Endothelial cell of umbilical vein (primary cell): ENCODE measurements at regions of chr3 and their contacts with region 1.

Region 1: GRCh38 chr3:169390271-169391230 is 273.0 kb downstream of the MECOM start:
- DNase-seq: peak; percentile 80
- H3K4me3 ChIP-seq: no peak overlapping the region
- H3K27ac ChIP-seq: peak overlapping the region; percentile 88
- H3K4me1 ChIP-seq: peaks cover 45% of the 10 kb centered on the region
- H3K27me3 ChIP-seq: no peaks in the 10 kb centered on the region
- CTCF ChIP-seq: peak; percentile 15 to 25
- POLR2A ChIP-seq: no peak

Region 2: DNA sequence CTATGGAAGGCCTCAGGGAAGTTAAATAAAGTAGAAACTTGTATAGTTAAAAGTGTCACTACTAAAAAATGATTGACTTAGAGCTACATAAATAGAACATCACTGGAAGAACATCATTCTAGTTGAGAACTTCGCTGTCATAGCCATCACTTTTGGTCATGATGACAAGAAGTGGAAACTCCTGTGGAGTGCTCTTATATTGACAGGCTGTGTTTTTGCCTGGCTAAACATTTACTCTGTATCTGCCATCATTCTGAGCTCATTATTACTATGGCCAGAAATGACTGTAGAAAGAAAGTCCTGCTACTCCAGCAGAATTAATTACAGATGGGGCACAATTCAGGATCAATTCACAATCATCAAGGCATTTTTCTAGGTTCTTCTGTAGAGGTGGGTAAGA is 1129.7 kb before region 1 on chr3:
- CTCF ChIA-PET with region 1: no interaction called
- POLR2A ChIA-PET with region 1: no interaction called
- dilution Hi-C with region 1: no loop called
- intact Hi-C with region 1: no loop called
- DNase-seq: no peak
- H3K4me3 ChIP-seq: no peak overlapping the region
- H3K27ac ChIP-seq: no peak overlapping the region
- H3K4me1 ChIP-seq: no peaks in the 10 kb centered on the region
- H3K27me3 ChIP-seq: peaks cover 0 to 2% of the 10 kb centered on the region in 2 experiments
- CTCF ChIP-seq: no peak
- POLR2A ChIP-seq: no peak

Region 3: DNA sequence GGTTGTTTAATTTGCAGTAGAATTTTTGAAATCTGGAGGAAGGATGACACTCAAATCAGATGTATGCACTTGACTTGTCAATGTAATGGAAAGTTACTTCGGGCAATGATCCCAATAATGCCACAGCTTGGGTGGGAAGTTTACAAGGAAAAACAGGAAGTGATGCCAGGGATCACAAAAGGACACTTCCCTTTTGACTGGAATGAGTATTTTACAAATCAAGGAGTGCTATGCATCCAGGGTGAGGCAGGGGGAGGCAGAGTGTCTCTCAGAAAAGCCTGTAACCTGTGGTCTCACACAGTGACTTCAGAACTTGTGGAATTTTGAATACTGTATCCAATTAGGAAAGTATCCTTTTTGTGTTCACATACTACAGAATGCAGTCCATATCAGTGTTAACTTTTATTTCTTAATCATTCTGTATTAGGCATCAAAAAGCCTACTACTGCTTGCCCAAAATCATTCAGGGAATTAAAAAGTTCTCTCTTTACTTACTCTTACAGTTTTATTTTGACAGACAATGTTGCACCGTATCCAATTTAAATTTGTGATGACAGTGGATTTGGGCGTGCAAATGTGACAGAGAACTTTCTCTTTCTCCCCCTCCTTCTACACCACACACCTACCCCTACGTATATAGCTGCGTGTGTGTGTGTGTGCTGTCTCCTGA is 172.1 kb before region 1 on chr3:
- CTCF ChIA-PET with region 1: interaction called, 28 read pairs
- POLR2A ChIA-PET with region 1: no interaction called
- dilution Hi-C with region 1: no loop called
- intact Hi-C with region 1: loop called (anchors 1 kb)
- DNase-seq: peak; percentile 98
- H3K4me3 ChIP-seq: no peak overlapping the region
- H3K27ac ChIP-seq: peak overlapping the region; percentile 66
- H3K4me1 ChIP-seq: peaks cover 23% of the 10 kb centered on the region
- H3K27me3 ChIP-seq: no peaks in the 10 kb centered on the region
- CTCF ChIP-seq: peak; percentile 74 to 89
- POLR2A ChIP-seq: no peak

Region 4: GRCh38 chr3:169305460-169305859 is 85.1 kb before region 1 on chr3:
- CTCF ChIA-PET with region 1: interaction called, 20 read pairs
- POLR2A ChIA-PET with region 1: no interaction called
- dilution Hi-C with region 1: no loop called
- intact Hi-C with region 1: loop called (anchors 5 kb)
- DNase-seq: no peak
- H3K4me3 ChIP-seq: no peak overlapping the region
- H3K27ac ChIP-seq: no peak overlapping the region
- H3K4me1 ChIP-seq: peaks cover 20% of the 10 kb centered on the region
- H3K27me3 ChIP-seq: no peaks in the 10 kb centered on the region
- CTCF ChIP-seq: no peak
- POLR2A ChIP-seq: no peak

Region 5: GRCh38 chr3:169430707-169431404 is 40.3 kb after region 1 on chr3:
- CTCF ChIA-PET with region 1: interaction called, 10 read pairs
- POLR2A ChIA-PET with region 1: no interaction called
- dilution Hi-C with region 1: no loop called
- intact Hi-C with region 1: loop called (anchors 1 kb)
- DNase-seq: peak; percentile 90
- H3K4me3 ChIP-seq: no peak overlapping the region
- H3K27ac ChIP-seq: peak overlapping the region; percentile 79
- H3K4me1 ChIP-seq: peaks cover 30% of the 10 kb centered on the region
- H3K27me3 ChIP-seq: no peaks in the 10 kb centered on the region
- CTCF ChIP-seq: no peak
- POLR2A ChIP-seq: no peak

Region 6: DNA sequence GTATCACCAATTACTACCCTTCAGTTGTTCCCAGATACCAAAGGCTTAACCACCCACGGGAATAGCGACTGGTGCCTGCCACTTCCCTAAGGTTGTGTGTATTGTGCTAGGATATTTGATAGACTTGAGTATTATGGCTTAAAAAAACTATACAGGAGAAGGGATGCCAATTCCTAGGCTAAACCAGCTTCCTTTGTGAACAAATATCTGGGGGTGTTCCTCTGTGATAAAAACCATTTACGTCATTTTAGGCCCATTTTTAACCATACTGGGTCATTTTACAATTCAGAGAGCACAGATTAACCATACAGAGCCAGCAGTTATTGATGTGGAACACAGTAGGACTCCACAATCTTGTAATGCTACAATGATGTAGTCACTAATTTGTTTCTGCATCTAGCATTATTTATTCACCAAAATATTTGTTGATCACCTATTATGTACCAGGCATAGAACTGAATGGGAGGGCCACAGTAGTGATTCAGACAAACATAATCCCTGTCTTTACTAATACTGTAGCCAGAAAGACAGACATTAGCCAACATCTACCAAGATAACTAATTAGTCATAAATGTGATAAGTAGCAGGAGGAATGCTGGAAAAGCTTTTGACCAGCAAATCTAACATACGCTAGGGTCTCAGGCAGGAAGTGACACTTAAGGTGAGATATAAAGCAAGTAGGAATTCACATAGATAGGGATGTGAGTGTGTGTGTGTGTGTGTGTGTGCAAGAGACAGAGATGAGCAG is 88.2 kb after region 1 on chr3:
- CTCF ChIA-PET with region 1: no interaction called
- POLR2A ChIA-PET with region 1: no interaction called
- dilution Hi-C with region 1: no loop called
- intact Hi-C with region 1: loop called (anchors 5 kb)
- DNase-seq: no peak
- H3K4me3 ChIP-seq: no peak overlapping the region
- H3K27ac ChIP-seq: peak overlapping the region; percentile 34
- H3K4me1 ChIP-seq: peaks cover 6% of the 10 kb centered on the region
- H3K27me3 ChIP-seq: no peaks in the 10 kb centered on the region
- CTCF ChIP-seq: no peak
- POLR2A ChIP-seq: no peak

Region 7: DNA sequence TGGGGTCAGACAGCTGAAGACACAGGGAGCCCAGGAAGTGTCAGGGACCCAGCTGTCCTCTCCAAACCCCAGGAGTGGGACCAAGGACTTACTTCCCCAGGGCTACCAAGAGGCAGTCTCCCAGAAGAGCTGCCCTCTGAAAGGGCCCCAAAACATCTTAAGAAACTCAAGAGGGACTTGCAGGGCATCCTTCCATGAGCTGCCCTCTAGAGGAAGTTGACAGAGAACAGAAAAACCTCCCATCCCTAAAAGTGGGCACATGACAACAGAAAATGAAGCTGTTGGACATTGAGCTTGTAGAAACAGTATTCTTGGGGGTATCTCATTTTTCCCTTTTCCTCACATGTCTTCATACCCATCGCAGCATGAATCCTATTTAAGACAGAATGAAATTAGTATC is 214.0 kb after region 1 on chr3:
- CTCF ChIA-PET with region 1: interaction called, 13 read pairs
- POLR2A ChIA-PET with region 1: no interaction called
- dilution Hi-C with region 1: no loop called
- intact Hi-C with region 1: no loop called
- DNase-seq: no peak
- H3K4me3 ChIP-seq: no peak overlapping the region
- H3K27ac ChIP-seq: no peak overlapping the region
- H3K4me1 ChIP-seq: peaks cover 9% of the 10 kb centered on the region
- H3K27me3 ChIP-seq: no peaks in the 10 kb centered on the region
- CTCF ChIP-seq: peak in 1 of 2 donors; percentile 17
- POLR2A ChIP-seq: no peak

Region 8: DNA sequence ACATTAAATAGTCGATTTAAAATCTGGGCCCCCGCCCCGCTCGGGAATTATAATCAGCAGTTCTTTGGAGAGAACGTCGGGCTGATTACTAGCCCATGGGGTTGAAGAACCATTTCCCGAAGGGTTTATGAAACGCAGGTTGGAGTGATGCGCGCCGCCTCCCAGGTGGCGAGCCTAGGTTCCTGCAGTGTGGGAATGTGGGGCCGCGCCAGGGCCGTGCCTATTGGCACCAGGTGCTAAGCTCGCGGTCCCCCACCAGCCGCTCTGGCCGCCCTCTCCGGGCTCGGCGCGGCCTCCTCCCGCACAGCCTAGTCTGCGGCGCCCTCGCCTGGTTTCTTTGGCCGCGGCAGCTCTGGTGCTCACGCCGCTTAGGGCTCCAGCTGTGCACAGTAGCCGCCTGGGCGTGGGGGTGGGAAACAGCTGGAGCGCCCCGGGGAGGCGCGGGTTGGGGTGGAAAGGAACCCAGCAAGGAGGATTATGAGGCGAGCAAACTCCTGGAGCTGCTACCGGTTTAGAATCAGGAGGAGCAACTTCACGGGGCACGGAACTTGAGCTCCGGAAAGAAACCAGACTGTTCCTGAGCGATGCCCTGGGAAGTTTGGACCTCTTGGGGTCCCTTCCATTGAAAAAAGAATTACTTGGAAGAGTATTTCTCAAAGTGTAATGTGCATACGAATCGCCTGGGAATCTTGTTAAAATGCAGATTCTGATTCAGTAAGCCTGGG is 278.6 kb after region 1 on chr3:
- CTCF ChIA-PET with region 1: interaction called, 94 read pairs
- POLR2A ChIA-PET with region 1: no interaction called
- dilution Hi-C with region 1: no loop called
- intact Hi-C with region 1: no loop called
- DNase-seq: peak; percentile 84
- H3K4me3 ChIP-seq: peak overlapping the region; percentile 45 to 77 (median 70)
- H3K27ac ChIP-seq: peak overlapping the region; percentile 51
- H3K4me1 ChIP-seq: peaks cover 42% of the 10 kb centered on the region
- H3K27me3 ChIP-seq: no peaks in the 10 kb centered on the region
- CTCF ChIP-seq: peak; percentile 94
- POLR2A ChIP-seq: no peak